ENCODE measurements at regions of chr12 and their contacts with region 1.

Region 1: GRCh38 chr12:4908684-4909409 is 858 bp upstream of the KCNA1 start:
- DNase-seq: peak; percentile 42 to 76 (median 72)
- H3K4me3 ChIP-seq: peak overlapping the region in 3 of 7 experiments; percentile 69 to 77 (median 70)
- H3K27ac ChIP-seq: no peak overlapping the region
- H3K4me1 ChIP-seq: peaks cover 0 to 30% (median 17%) of the 10 kb centered on the region in 4 experiments
- H3K27me3 ChIP-seq: peaks cover 12 to 92% (median 49%) of the 10 kb centered on the region in 5 experiments

Region 2: DNA sequence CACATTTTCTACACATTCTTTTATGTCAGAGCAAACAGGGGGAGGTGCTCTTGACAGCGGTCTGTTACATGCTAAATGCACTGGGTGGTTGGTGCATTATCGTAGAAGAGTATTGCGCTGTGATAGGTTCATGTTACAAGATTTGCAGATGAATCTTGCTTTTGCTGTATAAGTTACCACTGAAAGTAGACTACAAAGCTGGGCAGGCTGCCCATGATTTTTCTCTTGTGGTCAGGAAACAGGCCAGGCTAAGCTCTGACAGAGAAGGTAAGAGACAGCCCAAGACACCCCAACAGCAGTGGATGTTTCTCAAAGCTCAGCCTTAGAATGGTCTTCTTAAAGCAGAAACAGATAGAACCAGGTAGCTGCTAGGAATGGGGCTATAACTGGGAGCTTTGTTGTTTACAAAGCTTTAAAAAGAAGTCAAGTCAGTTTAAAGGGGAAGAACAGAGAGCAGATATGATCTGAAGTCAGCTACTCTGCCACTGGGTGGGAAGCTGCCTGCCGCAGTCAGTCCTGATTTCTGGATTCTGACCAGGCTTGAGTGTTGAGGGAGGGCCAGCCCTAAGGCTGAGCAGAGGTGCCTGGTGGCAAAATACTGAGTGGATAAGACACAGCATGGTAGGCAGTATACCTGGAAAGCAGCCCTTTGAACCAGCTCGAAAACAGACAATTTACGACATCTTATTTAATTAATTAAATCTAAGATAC is 10.3 kb after region 1 on chr12:
- CTCF ChIA-PET with region 1: interaction called, 12 read pairs
- POLR2A ChIA-PET with region 1: no interaction called
- DNase-seq: peak; percentile 36 to 83 (median 76)
- H3K4me3 ChIP-seq: peak overlapping the region in 2 of 7 experiments; percentile 7 to 46
- H3K27ac ChIP-seq: no peak overlapping the region
- H3K4me1 ChIP-seq: peaks cover 0 to 10% (median 5%) of the 10 kb centered on the region in 4 experiments
- H3K27me3 ChIP-seq: peaks cover 0 to 14% (median 9%) of the 10 kb centered on the region in 5 experiments